ENCODE measurements at regions of chr19 and their contacts with region 1.

Region 1: DNA sequence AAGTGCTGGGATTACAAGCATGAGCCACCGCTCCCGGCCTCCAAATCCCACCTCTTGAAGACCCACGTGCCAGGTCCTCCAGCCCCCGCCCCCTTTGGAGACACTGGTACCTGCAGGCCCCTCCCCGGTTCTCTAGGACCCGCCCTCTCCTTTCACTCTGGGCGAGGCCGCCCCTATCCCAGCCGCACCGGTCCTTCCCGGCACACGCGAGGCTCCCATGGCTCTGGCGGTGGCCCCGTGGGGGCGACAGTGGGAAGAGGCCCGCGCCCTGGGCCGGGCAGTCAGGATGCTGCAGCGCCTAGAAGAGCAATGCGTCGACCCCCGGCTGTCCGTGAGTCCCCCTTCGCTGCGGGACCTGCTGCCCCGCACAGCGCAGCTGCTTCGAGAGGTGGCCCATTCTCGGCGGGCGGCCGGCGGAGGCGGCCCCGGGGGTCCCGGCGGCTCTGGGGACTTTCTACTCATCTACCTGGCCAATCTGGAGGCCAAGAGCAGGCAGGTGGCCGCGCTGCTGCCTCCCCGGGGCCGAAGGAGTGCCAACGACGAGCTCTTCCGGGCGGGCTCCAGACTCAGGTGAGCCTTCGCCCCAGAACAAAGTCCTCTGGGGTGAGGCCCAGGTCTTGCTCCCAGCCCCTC is at the start of gene CBLC:
- DNase-seq: peak; percentile 96
- ATAC-seq: peak; percentile 99
- H3K4me3 Mint-ChIP-seq: peak within 1 kb of the TSS; percentile 61
- H3K27ac Mint-ChIP-seq: 0 out of 2 replicates have a peak within 1 kb of the TSS, but pooled peaks have one; percentile 6
- H3K4me1 Mint-ChIP-seq: peaks cover 4% of the 10 kb centered on the region
- H3K27me3 Mint-ChIP-seq: peaks cover 17% of the 10 kb centered on the region
- CTCF ChIP-seq: no peak
- total RNA-seq, gene CBLC: 20.5 to 29.5 TPM (median 27.8 TPM) in 3 replicates

Region 2: DNA sequence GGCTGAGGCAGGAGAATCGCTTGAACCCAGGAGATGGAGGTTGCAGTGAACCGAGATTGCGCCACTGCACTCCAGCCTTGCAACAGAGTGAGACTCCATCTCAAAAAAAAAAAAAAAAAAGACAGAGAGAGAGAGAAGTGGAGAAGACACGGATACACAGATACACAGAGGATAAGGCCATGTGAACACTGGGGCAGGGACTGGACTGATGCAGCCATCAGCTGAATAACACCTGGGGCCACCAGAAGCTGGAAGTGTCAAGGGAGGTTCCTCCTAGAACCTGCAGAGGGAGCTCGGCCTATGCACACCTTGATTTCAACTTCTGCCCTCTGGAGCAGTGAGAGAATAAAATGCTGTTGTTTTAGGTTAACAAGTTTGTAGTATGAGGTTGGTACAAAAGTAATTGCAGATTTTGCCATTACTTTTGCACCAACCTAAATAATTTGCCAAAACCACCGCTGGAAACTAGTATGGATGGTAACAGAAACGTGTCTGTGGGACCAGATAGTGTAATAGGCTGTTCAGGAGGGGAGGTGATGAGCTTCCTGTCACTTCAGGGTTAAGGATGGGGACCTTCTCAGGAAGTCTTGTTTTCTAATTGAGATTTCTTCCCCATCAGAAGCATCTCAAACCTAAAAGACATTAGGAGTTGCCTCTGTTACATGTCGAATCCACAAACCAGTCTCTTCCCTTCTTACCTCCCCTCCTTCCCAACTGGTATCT is 200.8 kb before region 1 on chr19:
- CTCF ChIA-PET with region 1: no interaction called
- POLR2A ChIA-PET with region 1: no interaction called
- DNase-seq: peak; percentile 64
- ATAC-seq: peak; percentile 94
- H3K4me3 Mint-ChIP-seq: no peak overlapping the region
- H3K27ac Mint-ChIP-seq: no peak overlapping the region
- H3K4me1 Mint-ChIP-seq: peaks cover 16% of the 10 kb centered on the region
- H3K27me3 Mint-ChIP-seq: peaks cover 3% of the 10 kb centered on the region
- CTCF ChIP-seq: peak; percentile 28

Region 3: GRCh38 chr19:44689056-44689895 is 88.6 kb before region 1 on chr19:
- CTCF ChIA-PET with region 1: interaction called, 128 read pairs
- POLR2A ChIA-PET with region 1: no interaction called
- DNase-seq: peak; percentile 94
- ATAC-seq: peak; percentile 84
- H3K4me3 Mint-ChIP-seq: peak overlapping the region; percentile 11; the same call in 1 of the 2 replicates
- H3K27ac Mint-ChIP-seq: no peak overlapping the region
- H3K4me1 Mint-ChIP-seq: peaks cover 22% of the 10 kb centered on the region
- H3K27me3 Mint-ChIP-seq: no peaks in the 10 kb centered on the region
- CTCF ChIP-seq: peak; percentile 97

Region 4: DNA sequence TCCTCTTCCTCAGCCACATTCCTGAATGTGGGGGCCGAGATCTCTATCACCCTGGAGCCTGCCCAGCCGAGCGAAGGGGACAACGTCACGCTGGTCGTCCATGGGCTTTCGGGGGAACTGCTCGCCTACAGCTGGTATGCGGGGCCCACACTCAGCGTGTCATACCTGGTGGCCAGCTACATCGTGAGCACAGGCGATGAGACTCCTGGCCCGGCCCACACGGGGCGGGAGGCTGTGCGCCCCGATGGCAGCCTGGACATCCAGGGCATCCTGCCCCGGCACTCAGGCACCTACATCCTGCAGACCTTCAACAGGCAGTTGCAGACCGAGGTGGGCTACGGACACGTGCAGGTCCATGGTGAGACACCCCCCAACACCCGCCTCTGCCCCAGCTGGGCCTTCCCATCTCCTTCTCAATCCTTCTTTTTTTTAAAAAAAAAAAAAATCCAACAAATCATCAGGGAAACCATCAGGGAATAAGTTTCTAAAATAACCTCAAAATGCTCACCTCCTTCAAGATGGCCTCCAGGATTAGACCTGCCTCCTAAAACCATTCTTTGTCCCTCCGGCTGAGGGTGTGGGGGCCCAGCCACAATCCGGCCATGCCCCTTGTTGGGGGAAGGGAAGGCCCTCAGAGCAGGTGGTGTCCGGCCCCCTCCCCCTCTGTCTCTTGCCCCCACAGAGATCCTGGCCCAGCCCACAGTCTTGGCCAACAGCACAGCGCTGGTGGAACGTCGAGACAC is 74.3 kb before region 1 on chr19:
- CTCF ChIA-PET with region 1: no interaction called
- POLR2A ChIA-PET with region 1: no interaction called
- DNase-seq: no peak
- ATAC-seq: no peak
- H3K4me3 Mint-ChIP-seq: no peak overlapping the region
- H3K27ac Mint-ChIP-seq: no peak overlapping the region
- H3K4me1 Mint-ChIP-seq: no peaks in the 10 kb centered on the region; the same call in 1 of the 2 replicates
- H3K27me3 Mint-ChIP-seq: no peaks in the 10 kb centered on the region; the same call in 1 of the 2 replicates
- CTCF ChIP-seq: no peak

Region 5: GRCh38 chr19:44718441-44719261 is 59.2 kb before region 1 on chr19:
- CTCF ChIA-PET with region 1: interaction called, 548 read pairs
- POLR2A ChIA-PET with region 1: no interaction called
- DNase-seq: peak; percentile 66
- ATAC-seq: peak; percentile 84
- H3K4me3 Mint-ChIP-seq: peak overlapping the region; percentile 81
- H3K27ac Mint-ChIP-seq: peak overlapping the region; percentile 97
- H3K4me1 Mint-ChIP-seq: peaks cover 38% of the 10 kb centered on the region
- H3K27me3 Mint-ChIP-seq: no peaks in the 10 kb centered on the region
- CTCF ChIP-seq: no peak

Region 6: GRCh38 chr19:44796701-44797115 is 18.9 kb after region 1 on chr19:
- CTCF ChIA-PET with region 1: interaction called, 28 read pairs
- POLR2A ChIA-PET with region 1: no interaction called
- DNase-seq: no peak
- ATAC-seq: peak; percentile 52
- H3K4me3 Mint-ChIP-seq: peak overlapping the region; percentile 6; the same call in 1 of the 2 replicates
- H3K27ac Mint-ChIP-seq: peak overlapping the region; percentile 96
- H3K4me1 Mint-ChIP-seq: peaks cover 31% of the 10 kb centered on the region
- H3K27me3 Mint-ChIP-seq: peaks cover 14% of the 10 kb centered on the region
- CTCF ChIP-seq: no peak

Region 7: GRCh38 chr19:44808463-44809371 is 30.9 kb after region 1 on chr19 and contains the start of gene BCAM:
- CTCF ChIA-PET with region 1: interaction called, 74 read pairs
- POLR2A ChIA-PET with region 1: interaction called, 4 read pairs
- DNase-seq: peak; percentile 70
- ATAC-seq: peak; percentile 30
- H3K4me3 Mint-ChIP-seq: peak within 1 kb of the TSS; percentile 75
- H3K27ac Mint-ChIP-seq: peak within 1 kb of the TSS; percentile 95
- H3K4me1 Mint-ChIP-seq: peaks cover 42% of the 10 kb centered on the region
- H3K27me3 Mint-ChIP-seq: peaks cover 78% of the 10 kb centered on the region
- CTCF ChIP-seq: no peak
- total RNA-seq, gene BCAM: 73.1 to 89.5 TPM (median 80.0 TPM) in 3 replicates

Region 8: GRCh38 chr19:44845612-44846454 is 68.0 kb after region 1 on chr19 and contains the start of gene NECTIN2:
- CTCF ChIA-PET with region 1: interaction called, 10 read pairs
- POLR2A ChIA-PET with region 1: interaction called, 4 read pairs
- DNase-seq: peak; percentile 100
- ATAC-seq: peak; percentile 59
- H3K4me3 Mint-ChIP-seq: peak within 1 kb of the TSS; percentile 97
- H3K27ac Mint-ChIP-seq: peak within 1 kb of the TSS; percentile 99
- H3K4me1 Mint-ChIP-seq: peaks cover 23% of the 10 kb centered on the region
- H3K27me3 Mint-ChIP-seq: peaks cover 14% of the 10 kb centered on the region
- CTCF ChIP-seq: peak; percentile 57
- total RNA-seq, gene NECTIN2: 164 to 170 TPM (median 168 TPM) in 3 replicates